ENCODE measurements at regions of chr19 and their contacts with region 1.

Region 1: GRCh38 chr19:11286312-11286974 is 9.5 kb upstream of the TSPAN16 start:
- DNase-seq: no peak
- ATAC-seq: peak; percentile 80

Region 2: GRCh38 chr19:11242864-11243797 is 43.3 kb before region 1 on chr19:
- intact Hi-C with region 1: loop called (anchors 2 kb)
- DNase-seq: peak; percentile 97
- ATAC-seq: peak; percentile 87